Spleen (tissue), 13 donors: ENCODE measurements at regions of chr3 and their contacts with region 1.

Region 1: GRCh38 chr3:139935016-139935865 is at the start of gene CLSTN2:
- DNase-seq: no peak
- H3K4me3 ChIP-seq: peak within 1 kb of the TSS; percentile 9 to 65 (median 30)
- H3K27ac ChIP-seq: no peak within 1 kb of the TSS
- H3K4me1 ChIP-seq: peaks cover 7 to 25% (median 22%) of the 10 kb centered on the region in 6 donors
- H3K27me3 ChIP-seq: peaks cover 0 to 73% (median 49%) of the 10 kb centered on the region in 7 donors
- CTCF ChIP-seq: no peak
- POLR2A ChIP-seq: no peak
- total RNA-seq, gene CLSTN2: 0.06 to 0.22 (median 0.13) TPM

Region 2: GRCh38 chr3:140341203-140341602 is 406.0 kb after region 1 on chr3:
- intact Hi-C with region 1: no loop called
- DNase-seq: no peak
- H3K4me3 ChIP-seq: no peak overlapping the region
- H3K27ac ChIP-seq: no peak overlapping the region
- H3K4me1 ChIP-seq: no peaks in the 10 kb centered on the region
- H3K27me3 ChIP-seq: no peaks in the 10 kb centered on the region
- CTCF ChIP-seq: no peak
- POLR2A ChIP-seq: no peak

Region 3: GRCh38 chr3:140863580-140864009 is 928.4 kb after region 1 on chr3:
- intact Hi-C with region 1: loop called (anchors 10 kb)
- DNase-seq: no peak
- H3K4me3 ChIP-seq: no peak overlapping the region
- H3K27ac ChIP-seq: no peak overlapping the region
- H3K4me1 ChIP-seq: peaks cover 0 to 7% (median 0%) of the 10 kb centered on the region in 6 donors
- H3K27me3 ChIP-seq: peaks cover 0 to 6% (median 0%) of the 10 kb centered on the region in 7 donors
- CTCF ChIP-seq: peak in 8 of 11 experiments; percentile 22 to 53 (median 40)
- POLR2A ChIP-seq: no peak